Body of pancreas (tissue), 4 donors: ENCODE measurements at regions of chr17 and their contacts with region 1.

Region 1: GRCh38 chr17:80426681-80427326 is 11.8 kb downstream of the ENDOV start:
- DNase-seq: peak; percentile 81 to 90 (median 82)
- ATAC-seq: peak; percentile 86
- H3K4me3 ChIP-seq: no peak overlapping the region
- H3K27ac ChIP-seq: no peak overlapping the region
- H3K4me1 ChIP-seq: peaks cover 8% of the 10 kb centered on the region
- H3K27me3 ChIP-seq: no peaks in the 10 kb centered on the region
- CTCF ChIP-seq: peak; percentile 96 to 99 (median 97)
- POLR2A ChIP-seq: no peak

Region 2: DNA sequence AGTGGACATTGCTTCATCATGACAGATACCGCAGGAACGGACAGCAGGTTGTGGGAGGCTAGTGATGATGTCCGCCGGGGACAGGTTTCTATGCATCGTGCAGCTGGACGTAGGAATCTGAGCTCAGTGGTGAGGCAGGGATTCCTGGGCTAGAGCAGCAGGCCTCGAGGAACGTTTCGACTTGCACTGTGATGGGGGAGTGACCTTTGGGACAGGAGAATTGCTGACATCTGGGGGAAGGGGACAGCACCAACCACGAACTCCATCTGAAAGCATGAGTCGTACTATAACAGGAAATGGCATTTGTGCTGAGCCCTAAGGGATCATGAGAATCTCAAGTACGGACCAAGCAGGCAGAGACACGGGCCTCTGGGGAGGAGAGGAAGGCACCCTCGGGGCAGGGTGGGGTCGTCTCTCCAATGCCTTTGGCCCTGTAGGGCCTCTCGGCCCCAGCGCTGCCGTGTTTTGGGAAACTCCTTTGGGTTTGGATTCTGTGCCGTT is 77.6 kb before region 1 on chr17:
- intact Hi-C with region 1: no loop called
- DNase-seq: no peak
- ATAC-seq: no peak
- H3K4me3 ChIP-seq: no peak overlapping the region
- H3K27ac ChIP-seq: no peak overlapping the region
- H3K4me1 ChIP-seq: no peaks in the 10 kb centered on the region
- H3K27me3 ChIP-seq: no peaks in the 10 kb centered on the region
- CTCF ChIP-seq: no peak
- POLR2A ChIP-seq: no peak

Region 3: GRCh38 chr17:80569924-80570323 is 143.1 kb after region 1 on chr17:
- intact Hi-C with region 1: loop called (anchors 5 kb)
- DNase-seq: no peak
- ATAC-seq: no peak
- H3K4me3 ChIP-seq: no peak overlapping the region
- H3K27ac ChIP-seq: no peak overlapping the region
- H3K4me1 ChIP-seq: no peaks in the 10 kb centered on the region
- H3K27me3 ChIP-seq: no peaks in the 10 kb centered on the region
- CTCF ChIP-seq: no peak
- POLR2A ChIP-seq: no peak

Region 4: GRCh38 chr17:80704381-80704819 is 277.6 kb after region 1 on chr17:
- intact Hi-C with region 1: no loop called
- DNase-seq: no peak
- ATAC-seq: no peak
- H3K4me3 ChIP-seq: no peak overlapping the region
- H3K27ac ChIP-seq: no peak overlapping the region
- H3K4me1 ChIP-seq: peaks cover 8% of the 10 kb centered on the region
- H3K27me3 ChIP-seq: no peaks in the 10 kb centered on the region
- CTCF ChIP-seq: no peak
- POLR2A ChIP-seq: no peak

Region 5: DNA sequence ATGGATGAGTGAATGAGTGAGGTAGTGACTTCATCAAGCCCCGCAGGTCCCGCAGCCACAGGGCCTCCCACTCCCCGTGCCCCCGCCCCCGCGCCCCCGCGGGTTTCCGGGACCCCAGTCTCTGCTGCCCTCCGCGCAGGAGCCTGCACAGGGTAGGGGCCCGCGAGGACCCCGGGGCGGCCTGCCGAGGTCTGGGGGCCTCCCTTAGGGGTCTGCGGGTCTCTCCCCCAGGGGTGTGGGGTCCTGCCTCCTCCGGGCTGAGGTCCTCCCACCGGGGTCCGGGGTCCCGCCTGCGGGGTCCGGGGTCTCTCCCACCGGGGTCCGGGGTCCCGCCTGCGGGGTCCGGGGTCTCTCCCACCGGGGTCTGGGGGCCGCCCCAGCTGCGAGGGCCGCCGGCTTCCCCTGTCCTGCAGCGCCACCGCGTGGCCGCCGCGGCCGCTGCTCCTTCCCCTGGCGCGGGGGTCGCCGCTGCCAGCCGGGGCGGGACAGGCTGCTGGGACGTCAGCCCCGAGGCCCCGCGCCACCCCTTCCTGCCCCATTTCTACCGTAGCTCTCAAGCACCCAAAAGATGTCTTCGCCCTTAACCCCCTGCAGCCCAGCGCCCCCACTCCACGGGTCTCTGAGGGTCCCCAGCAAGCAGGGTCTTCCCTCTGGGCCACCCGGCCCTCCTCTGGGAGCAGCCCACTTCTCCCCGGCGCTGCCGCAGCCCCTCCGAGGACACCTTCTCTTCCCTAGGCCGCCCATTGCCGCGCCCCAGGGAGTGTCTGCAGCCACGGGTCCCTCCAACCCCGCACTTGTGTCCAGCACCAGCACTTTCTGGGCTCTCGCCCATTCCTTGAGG is 554.5 kb after region 1 on chr17:
- intact Hi-C with region 1: loop called (anchors 5 kb)
- DNase-seq: peak in 1 of 4 donors; percentile 11
- ATAC-seq: peak; percentile 19
- H3K4me3 ChIP-seq: no peak overlapping the region
- H3K27ac ChIP-seq: no peak overlapping the region
- H3K4me1 ChIP-seq: peaks cover 7% of the 10 kb centered on the region
- H3K27me3 ChIP-seq: peaks cover 0 to 15% of the 10 kb centered on the region in 2 donors
- CTCF ChIP-seq: peak; percentile 20 to 74 (median 53)
- POLR2A ChIP-seq: no peak

Region 6: DNA sequence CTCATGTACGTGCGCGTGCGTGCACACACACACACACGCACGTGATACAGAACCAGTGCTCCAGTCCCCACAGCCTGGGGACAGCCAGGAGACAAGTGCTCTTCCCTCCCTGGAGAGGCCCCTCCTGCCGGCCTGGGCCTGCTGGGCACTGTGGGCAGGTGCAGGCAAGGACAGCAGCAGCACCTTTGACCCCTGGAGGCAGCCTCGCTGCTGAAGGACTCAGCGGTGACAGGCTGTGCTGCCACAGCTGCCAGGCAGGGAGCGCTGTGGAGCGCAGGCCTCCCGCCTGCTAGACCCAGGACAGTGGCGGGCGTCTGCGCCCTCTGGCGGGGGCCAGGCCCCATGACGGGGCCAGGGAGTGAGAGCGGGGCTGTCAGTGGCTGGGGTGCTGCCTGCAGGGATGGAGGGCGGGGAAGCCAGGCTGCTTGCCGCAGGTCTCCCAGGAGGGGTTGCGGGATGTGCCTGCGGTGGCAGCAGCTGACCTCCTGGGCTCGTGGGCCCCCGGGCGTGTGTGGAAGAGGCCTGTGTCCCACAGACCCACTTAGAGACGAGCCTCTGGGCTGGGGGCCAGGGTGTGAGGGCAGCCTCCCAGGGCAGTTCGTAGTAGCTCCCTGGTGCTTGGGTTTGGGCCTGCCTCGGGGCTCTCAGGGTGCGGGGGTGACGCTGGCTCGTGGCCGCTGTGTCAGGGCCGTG is 675.0 kb after region 1 on chr17:
- intact Hi-C with region 1: loop called (anchors 10 kb)
- DNase-seq: peak; percentile 82 to 88 (median 86)
- ATAC-seq: peak; percentile 94
- H3K4me3 ChIP-seq: no peak overlapping the region
- H3K27ac ChIP-seq: no peak overlapping the region
- H3K4me1 ChIP-seq: peaks cover 16% of the 10 kb centered on the region
- H3K27me3 ChIP-seq: no peaks in the 10 kb centered on the region
- CTCF ChIP-seq: peak; percentile 99 to 100 (median 100)
- POLR2A ChIP-seq: no peak